Right cardiac atrium (tissue), 5 donors: ENCODE measurements at regions of chr11 and their contacts with region 1.

Region 1: GRCh38 chr11:60831143-60831500 is 10.8 kb upstream of the CCDC86 start:
- DNase-seq: peak; percentile 78 to 94 (median 93)
- ATAC-seq: peak; percentile 84 to 89
- H3K4me3 ChIP-seq: no peak overlapping the region
- H3K27ac ChIP-seq: no peak overlapping the region
- H3K4me1 ChIP-seq: no peaks in the 10 kb centered on the region
- H3K27me3 ChIP-seq: no peaks in the 10 kb centered on the region

Region 2: GRCh38 chr11:60870276-60870675 is 39.2 kb after region 1 on chr11:
- intact Hi-C with region 1: no loop called
- DNase-seq: peak in 1 of 3 donors; percentile 20
- ATAC-seq: no peak
- H3K4me3 ChIP-seq: no peak overlapping the region
- H3K27ac ChIP-seq: no peak overlapping the region
- H3K4me1 ChIP-seq: peaks cover 13% of the 10 kb centered on the region
- H3K27me3 ChIP-seq: no peaks in the 10 kb centered on the region

Region 3: DNA sequence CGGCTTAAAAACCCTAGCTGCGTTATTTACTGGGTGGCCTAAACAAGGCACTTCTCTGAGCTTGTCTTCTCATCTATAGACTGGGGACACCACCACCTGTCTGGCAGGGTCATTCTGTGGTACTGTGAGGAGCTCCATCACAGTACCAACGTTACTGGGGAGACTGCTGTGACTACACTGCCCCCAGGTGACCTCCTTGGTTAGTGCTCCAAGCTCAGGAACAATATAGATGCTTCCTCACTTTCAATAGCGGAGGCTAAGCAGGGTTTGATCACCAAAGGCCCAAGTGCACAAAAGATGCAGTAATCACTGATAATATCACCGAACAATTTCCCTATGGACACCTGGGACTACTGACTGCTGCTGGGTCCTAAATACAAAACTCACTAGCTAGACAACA is 56.4 kb after region 1 on chr11:
- intact Hi-C with region 1: loop called in 1 of 4 experiments (anchors 5 kb)
- DNase-seq: peak in 1 of 3 donors; percentile 55
- ATAC-seq: peak; percentile 72 to 73
- H3K4me3 ChIP-seq: no peak overlapping the region
- H3K27ac ChIP-seq: no peak overlapping the region
- H3K4me1 ChIP-seq: peaks cover 6% of the 10 kb centered on the region
- H3K27me3 ChIP-seq: no peaks in the 10 kb centered on the region

Region 4: GRCh38 chr11:60899046-60899936 is 68.2 kb after region 1 on chr11:
- intact Hi-C with region 1: loop called (anchors 5 kb)
- DNase-seq: no peak
- ATAC-seq: peak; percentile 62 to 77
- H3K4me3 ChIP-seq: no peak overlapping the region
- H3K27ac ChIP-seq: no peak overlapping the region
- H3K4me1 ChIP-seq: no peaks in the 10 kb centered on the region
- H3K27me3 ChIP-seq: no peaks in the 10 kb centered on the region

Region 5: DNA sequence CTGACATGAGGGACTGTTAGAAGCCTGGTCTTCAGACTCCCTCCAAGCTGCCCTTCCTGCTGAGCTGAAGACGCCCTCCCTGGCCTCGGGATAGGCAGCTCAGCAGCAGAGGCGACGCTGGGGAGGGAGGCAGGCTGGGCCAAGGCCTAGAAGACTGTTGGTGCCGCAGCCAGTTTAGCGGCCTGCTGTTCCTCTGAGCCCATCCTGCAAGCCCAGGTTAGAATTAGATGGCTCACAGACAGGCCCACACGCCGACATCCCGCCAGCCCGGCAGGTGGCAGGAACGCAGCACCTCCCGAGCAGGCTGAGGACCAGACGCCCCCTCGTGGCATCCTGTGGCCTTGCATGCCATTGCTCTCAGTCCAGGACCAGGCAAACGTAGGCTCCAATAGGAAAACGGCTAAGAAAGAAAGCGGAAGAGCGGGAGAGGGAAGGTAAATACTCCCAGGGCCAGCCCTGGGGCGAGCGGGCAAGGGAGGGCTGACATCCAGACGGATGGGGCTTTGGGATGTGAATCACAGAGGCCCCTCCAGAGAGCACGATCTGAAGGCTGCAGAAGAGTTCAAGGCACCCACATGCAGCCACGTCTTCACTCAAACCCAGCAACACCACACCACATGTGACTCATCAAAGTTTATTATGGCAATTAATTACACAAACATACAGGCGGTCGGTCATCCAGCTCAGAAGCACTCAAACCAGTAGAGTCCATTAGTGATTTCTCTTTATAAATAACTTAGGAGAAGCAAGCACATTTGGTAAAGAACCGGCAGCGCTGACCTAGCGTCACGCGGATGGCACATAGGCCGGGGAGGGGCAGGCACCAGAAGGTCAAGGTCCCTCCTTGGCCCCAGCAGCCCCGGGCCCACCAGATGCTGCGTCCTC is 298.8 kb after region 1 on chr11:
- intact Hi-C with region 1: loop called in 2 of 4 experiments (anchors 10 kb)
- DNase-seq: peak; percentile 84 to 94 (median 94)
- ATAC-seq: peak; percentile 79 to 85
- H3K4me3 ChIP-seq: no peak overlapping the region
- H3K27ac ChIP-seq: no peak overlapping the region
- H3K4me1 ChIP-seq: no peaks in the 10 kb centered on the region
- H3K27me3 ChIP-seq: no peaks in the 10 kb centered on the region

Region 6: DNA sequence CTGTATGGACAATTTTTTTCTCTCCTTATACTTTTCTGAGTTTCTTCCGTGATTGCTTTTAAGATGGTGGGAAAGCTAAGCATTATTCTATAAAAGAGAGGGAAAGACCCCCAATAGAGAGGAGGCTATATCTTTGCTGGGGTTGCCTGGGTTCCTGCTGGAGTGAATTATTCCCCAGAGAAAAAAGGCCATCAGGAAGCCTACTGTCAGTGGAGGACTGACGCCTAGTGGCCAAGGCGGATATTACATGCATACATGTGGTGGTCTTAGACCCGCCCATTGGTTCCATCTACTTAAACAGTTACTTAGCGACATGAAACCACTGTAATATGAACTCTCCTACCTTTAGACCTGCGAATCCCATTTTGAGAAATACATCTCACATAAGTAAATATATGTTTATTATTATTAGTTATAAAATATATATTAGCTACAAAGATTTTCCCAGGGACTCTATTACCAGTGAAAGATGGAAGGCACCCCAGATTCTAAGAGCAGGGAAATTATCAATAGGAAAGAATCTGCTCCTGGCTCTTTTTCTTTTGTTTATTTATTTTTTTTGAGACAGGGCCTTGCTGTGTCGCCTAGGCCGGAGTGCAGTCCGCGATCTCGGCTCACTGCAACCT is 356.5 kb after region 1 on chr11:
- intact Hi-C with region 1: loop called in 3 of 4 experiments (anchors 5 to 10 kb)
- DNase-seq: peak; percentile 74 to 89 (median 81)
- ATAC-seq: peak; percentile 60 to 75
- H3K4me3 ChIP-seq: no peak overlapping the region
- H3K27ac ChIP-seq: no peak overlapping the region
- H3K4me1 ChIP-seq: no peaks in the 10 kb centered on the region
- H3K27me3 ChIP-seq: no peaks in the 10 kb centered on the region